MCF 10A (cell line): ENCODE measurements at regions of chr3 and their contacts with region 1.

Region 1: GRCh38 chr3:27467545-27467944 is 16.6 kb downstream of the SLC4A7 start:
- DNase-seq: peak; percentile 60
- H3K4me3 Mint-ChIP-seq: no peak overlapping the region
- H3K27ac Mint-ChIP-seq: peak overlapping the region; percentile 76
- H3K4me1 Mint-ChIP-seq: peaks cover 7% of the 10 kb centered on the region
- H3K27me3 Mint-ChIP-seq: no peaks in the 10 kb centered on the region
- CTCF ChIP-seq: peak; percentile 36

Region 2: DNA sequence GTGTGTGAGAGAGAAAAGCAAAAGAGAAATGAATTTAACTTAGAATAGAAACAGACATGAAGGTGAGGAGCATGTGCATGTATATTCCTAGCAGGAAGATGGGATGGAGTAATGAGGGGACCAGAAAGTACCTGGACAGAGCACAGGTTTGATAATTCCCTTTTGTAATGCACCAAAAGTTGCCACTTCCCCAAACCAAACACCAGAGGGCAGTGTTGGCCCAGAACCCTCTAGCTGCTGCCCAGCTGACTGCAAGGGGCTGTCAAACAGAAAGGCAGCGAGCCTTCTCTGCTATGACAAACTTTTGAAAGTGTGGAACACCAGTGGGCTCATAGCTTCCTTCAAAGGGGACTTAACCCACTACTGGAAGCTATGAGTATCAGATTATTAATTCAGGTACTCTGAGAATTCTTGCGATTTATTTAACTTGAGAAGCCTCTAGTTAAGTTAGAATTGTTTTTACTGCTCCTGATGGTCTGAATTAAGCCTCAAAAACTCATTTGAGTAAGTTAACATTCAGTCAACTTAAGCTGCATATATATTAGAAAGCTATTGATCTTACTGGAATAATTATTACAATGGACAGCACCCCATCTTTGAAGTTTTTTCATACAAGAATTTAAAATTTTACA is 333.3 kb before region 1 on chr3:
- CTCF ChIA-PET with region 1: interaction called, 10 read pairs
- POLR2A ChIA-PET with region 1: no interaction called
- intact Hi-C with region 1: loop called (anchors 1 kb)
- DNase-seq: peak; percentile 80
- H3K4me3 Mint-ChIP-seq: no peak overlapping the region
- H3K27ac Mint-ChIP-seq: no peak overlapping the region
- H3K4me1 Mint-ChIP-seq: no peaks in the 10 kb centered on the region
- H3K27me3 Mint-ChIP-seq: no peaks in the 10 kb centered on the region
- CTCF ChIP-seq: peak; percentile 82

Region 3: DNA sequence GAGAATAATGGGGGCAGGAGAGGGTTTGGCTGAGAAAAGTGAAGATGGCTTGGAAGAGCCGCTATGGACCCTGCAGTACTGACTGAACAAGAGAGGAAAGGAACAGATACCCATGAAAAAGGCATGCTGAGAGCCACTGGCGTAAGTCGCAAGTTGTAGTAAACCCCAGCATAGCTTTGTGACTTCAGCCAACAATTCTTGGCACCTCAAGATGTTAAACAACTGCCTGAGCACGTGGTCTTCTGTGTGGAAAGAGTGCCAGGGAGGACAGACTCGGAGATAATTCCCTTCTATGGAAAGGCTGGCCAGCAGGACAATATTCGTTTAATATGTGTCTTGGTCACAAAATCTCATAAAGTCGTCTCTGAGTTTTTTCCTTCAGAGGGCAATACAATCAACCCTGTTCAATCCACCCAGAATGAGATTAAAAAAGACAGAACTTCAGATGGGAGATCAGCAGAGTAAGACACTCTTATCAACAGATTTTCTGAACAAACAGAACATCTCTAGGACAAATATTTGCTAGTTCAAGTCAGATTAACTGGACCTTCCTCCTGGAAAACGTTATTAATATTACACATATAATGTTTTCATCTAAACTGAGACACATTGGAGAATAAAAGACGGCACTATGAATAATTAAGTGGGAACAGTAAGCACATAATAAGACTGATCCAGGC is 147.6 kb before region 1 on chr3:
- CTCF ChIA-PET with region 1: interaction called, 38 read pairs
- POLR2A ChIA-PET with region 1: no interaction called
- intact Hi-C with region 1: no loop called
- DNase-seq: no peak
- H3K4me3 Mint-ChIP-seq: no peak overlapping the region
- H3K27ac Mint-ChIP-seq: no peak overlapping the region
- H3K4me1 Mint-ChIP-seq: peaks cover 5% of the 10 kb centered on the region
- H3K27me3 Mint-ChIP-seq: no peaks in the 10 kb centered on the region
- CTCF ChIP-seq: no peak

Region 4: GRCh38 chr3:27357665-27358258 is 109.8 kb before region 1 on chr3:
- CTCF ChIA-PET with region 1: interaction called, 7 read pairs
- POLR2A ChIA-PET with region 1: interaction called, 6 read pairs
- intact Hi-C with region 1: loop called (anchors 1 kb)
- DNase-seq: peak; percentile 76
- H3K4me3 Mint-ChIP-seq: no peak overlapping the region
- H3K27ac Mint-ChIP-seq: no peak overlapping the region
- H3K4me1 Mint-ChIP-seq: peaks cover 29% of the 10 kb centered on the region
- H3K27me3 Mint-ChIP-seq: no peaks in the 10 kb centered on the region
- CTCF ChIP-seq: peak; percentile 44

Region 5: DNA sequence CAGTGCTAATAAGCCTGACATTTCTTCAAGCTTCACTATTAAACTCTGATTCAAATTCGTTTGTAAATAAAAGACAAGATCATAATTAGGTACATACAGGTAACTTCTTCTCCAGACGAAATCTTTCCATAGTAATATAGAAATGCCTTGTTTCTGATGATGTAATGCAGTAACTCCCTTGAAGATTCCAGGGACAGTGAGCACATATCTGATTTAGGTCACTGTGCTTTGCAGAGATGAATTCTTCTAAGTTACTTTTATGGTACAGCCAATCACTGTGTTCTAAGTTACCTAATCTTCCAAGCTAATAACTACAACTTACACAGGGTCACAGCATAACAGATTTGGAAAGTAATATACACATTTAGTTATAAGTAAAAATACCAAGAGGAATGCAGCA is 11.0 kb before region 1 on chr3:
- CTCF ChIA-PET with region 1: interaction called, 20 read pairs
- POLR2A ChIA-PET with region 1: interaction called, 11 read pairs
- intact Hi-C with region 1: no loop called
- DNase-seq: no peak
- H3K4me3 Mint-ChIP-seq: no peak overlapping the region
- H3K27ac Mint-ChIP-seq: no peak overlapping the region
- H3K4me1 Mint-ChIP-seq: peaks cover 11% of the 10 kb centered on the region
- H3K27me3 Mint-ChIP-seq: no peaks in the 10 kb centered on the region
- CTCF ChIP-seq: no peak

Region 6: GRCh38 chr3:27521179-27521871 is 53.8 kb after region 1 on chr3:
- CTCF ChIA-PET with region 1: interaction called, 10 read pairs
- POLR2A ChIA-PET with region 1: interaction called, 4 read pairs
- intact Hi-C with region 1: no loop called
- DNase-seq: peak; percentile 96
- H3K4me3 Mint-ChIP-seq: no peak overlapping the region
- H3K27ac Mint-ChIP-seq: peak overlapping the region; percentile 29
- H3K4me1 Mint-ChIP-seq: peaks cover 27% of the 10 kb centered on the region
- H3K27me3 Mint-ChIP-seq: no peaks in the 10 kb centered on the region
- CTCF ChIP-seq: no peak

Region 7: DNA sequence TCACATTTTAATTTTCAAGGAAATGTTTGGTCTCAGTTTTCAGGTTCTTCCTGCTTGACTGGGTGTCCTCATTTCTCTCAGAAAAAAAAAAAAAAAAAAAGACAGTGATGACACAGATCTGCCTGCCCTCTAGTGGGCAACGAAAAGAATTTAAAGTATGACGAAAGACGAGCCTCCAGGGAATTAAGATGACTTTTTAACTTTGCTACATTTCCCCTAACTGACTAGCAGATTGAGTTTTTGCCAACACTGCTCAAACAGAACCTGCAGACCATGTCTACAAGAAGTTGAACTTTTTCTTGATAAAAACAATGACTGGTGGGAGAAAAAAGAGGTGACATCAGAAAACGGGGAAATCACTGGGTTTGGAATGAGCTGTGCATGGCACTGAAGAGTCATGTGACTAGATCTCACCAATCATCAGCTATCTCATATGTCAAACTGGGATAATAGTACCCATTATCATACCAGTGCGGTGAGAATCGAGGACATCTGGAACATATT is 213.8 kb after region 1 on chr3:
- CTCF ChIA-PET with region 1: interaction called, 34 read pairs
- POLR2A ChIA-PET with region 1: interaction called, 5 read pairs
- intact Hi-C with region 1: no loop called
- DNase-seq: peak; percentile 86
- H3K4me3 Mint-ChIP-seq: peak overlapping the region; percentile 74
- H3K27ac Mint-ChIP-seq: no peak overlapping the region
- H3K4me1 Mint-ChIP-seq: peaks cover 23% of the 10 kb centered on the region
- H3K27me3 Mint-ChIP-seq: no peaks in the 10 kb centered on the region
- CTCF ChIP-seq: peak; percentile 66